ENCODE measurements at regions of chr11 and their contacts with region 1.

Region 1: GRCh38 chr11:44556735-44557409 is 8.6 kb upstream of the CD82 start:
- DNase-seq: peak; percentile 84
- ATAC-seq: peak; percentile 76
- H3K4me3 Mint-ChIP-seq: no peak overlapping the region
- H3K27ac Mint-ChIP-seq: peak overlapping the region; percentile 35
- H3K4me1 Mint-ChIP-seq: peaks cover 27% of the 10 kb centered on the region
- H3K27me3 Mint-ChIP-seq: no peaks in the 10 kb centered on the region

Region 2: DNA sequence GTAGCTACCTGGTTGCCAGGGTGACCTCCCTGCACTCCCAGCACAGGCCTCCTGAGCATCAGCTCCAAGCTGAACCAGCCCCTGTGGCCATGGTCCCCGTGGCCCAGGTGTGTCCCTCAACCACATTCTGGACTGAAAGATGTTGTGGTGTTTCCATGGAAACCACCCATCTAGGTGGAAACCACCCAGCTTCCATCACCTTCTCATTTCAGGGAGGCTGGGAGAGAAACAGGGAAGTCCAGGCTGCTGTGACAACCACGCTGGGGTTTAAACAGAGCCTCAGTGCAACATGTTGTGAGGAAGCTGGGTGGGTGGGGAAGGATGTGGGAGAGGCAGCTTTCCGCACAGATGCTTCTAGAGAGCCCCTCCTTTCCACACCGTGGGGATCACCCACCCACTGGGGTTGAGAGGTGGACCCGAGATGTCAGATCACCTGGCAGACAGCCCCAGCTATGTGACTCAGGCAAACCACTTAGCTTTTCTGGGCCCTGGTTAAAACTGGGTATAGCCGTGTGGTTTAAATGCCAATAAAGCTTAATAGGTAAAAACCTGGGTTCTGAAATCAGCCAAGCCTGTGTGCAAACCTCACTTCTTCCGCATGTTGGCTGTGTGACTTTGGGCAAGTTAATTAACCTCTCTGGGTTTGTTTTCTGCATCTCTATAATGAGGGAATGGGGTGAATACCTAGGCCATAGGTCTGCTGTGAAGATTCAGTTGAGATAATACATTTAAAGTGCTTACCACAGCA is 55.0 kb after region 1 on chr11:
- CTCF ChIA-PET with region 1: interaction called, 77 read pairs
- POLR2A ChIA-PET with region 1: interaction called, 3 read pairs
- intact Hi-C with region 1: loop called (anchors 1 kb)
- DNase-seq: peak; percentile 77
- ATAC-seq: peak; percentile 69
- H3K4me3 Mint-ChIP-seq: no peak overlapping the region
- H3K27ac Mint-ChIP-seq: peak overlapping the region; percentile 60
- H3K4me1 Mint-ChIP-seq: peaks cover 88% of the 10 kb centered on the region
- H3K27me3 Mint-ChIP-seq: no peaks in the 10 kb centered on the region

Region 3: DNA sequence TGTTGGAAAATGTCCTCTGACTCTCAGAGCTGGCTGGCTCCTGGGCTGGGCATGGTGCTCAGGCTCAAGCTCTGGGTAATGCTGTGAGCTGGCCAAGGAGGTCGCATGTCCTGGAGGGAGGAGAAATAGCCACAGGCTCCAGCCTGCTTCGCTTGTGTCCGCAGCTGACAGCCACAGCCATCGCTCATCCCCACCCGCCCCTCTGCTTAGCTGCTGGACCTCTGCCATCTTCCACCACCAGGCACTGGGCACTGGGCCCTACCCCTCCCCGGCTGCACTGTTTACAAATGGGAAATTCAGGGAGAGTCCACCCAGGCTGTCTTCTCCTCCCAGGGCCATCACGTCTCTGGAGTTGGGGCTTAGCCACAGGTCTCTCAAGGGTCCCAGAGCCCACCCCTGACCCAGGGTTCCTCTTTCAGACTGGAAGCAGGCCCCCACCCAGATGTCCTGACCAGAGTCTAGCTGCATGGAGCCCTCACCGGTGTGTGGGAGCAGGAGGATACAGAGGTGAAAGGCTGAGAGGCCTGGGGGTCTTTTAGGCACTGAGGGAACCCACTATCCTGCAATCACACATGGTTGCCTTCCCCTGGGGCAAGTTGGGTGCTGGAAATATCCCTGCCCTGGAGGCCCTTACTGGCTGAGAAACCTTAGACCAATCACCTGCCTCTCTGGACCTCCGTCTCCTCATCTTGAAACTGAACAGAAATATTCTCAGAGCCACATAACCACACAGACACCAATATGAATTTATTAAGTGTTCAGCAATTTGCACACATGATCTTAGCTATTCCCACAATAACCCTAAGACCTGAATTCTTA is 71.2 kb after region 1 on chr11:
- CTCF ChIA-PET with region 1: interaction called, 16 read pairs
- POLR2A ChIA-PET with region 1: no interaction called
- intact Hi-C with region 1: loop called in 1 of 2 experiments (anchors 1 kb)
- DNase-seq: no peak
- ATAC-seq: no peak
- H3K4me3 Mint-ChIP-seq: no peak overlapping the region
- H3K27ac Mint-ChIP-seq: no peak overlapping the region
- H3K4me1 Mint-ChIP-seq: peaks cover 16% of the 10 kb centered on the region
- H3K27me3 Mint-ChIP-seq: no peaks in the 10 kb centered on the region

Region 4: GRCh38 chr11:44727373-44728287 is 170.8 kb after region 1 on chr11:
- CTCF ChIA-PET with region 1: no interaction called
- POLR2A ChIA-PET with region 1: no interaction called
- intact Hi-C with region 1: loop called (anchors 1 to 10 kb)
- DNase-seq: peak; percentile 87
- ATAC-seq: peak; percentile 78
- H3K4me3 Mint-ChIP-seq: peak overlapping the region; percentile 74
- H3K27ac Mint-ChIP-seq: peak overlapping the region; percentile 73
- H3K4me1 Mint-ChIP-seq: peaks cover 39% of the 10 kb centered on the region
- H3K27me3 Mint-ChIP-seq: peaks cover 25% of the 10 kb centered on the region

Region 5: GRCh38 chr11:44893846-44894617 is 337.2 kb after region 1 on chr11:
- CTCF ChIA-PET with region 1: interaction called, 6 read pairs
- POLR2A ChIA-PET with region 1: no interaction called
- intact Hi-C with region 1: loop called (anchors 5 kb)
- DNase-seq: peak; percentile 79
- ATAC-seq: peak; percentile 93
- H3K4me3 Mint-ChIP-seq: no peak overlapping the region
- H3K27ac Mint-ChIP-seq: no peak overlapping the region
- H3K4me1 Mint-ChIP-seq: peaks cover 1% of the 10 kb centered on the region
- H3K27me3 Mint-ChIP-seq: no peaks in the 10 kb centered on the region